ENCODE measurements at regions of chr9 and their contacts with region 1.

Region 1: GRCh38 chr9:21943464-21943863 is 50.7 kb downstream of the CDKN2A start:
- DNase-seq: no peak
- ATAC-seq: no peak
- H3K4me3 ChIP-seq: no peak overlapping the region
- H3K27ac ChIP-seq: no peak overlapping the region
- H3K4me1 ChIP-seq: no peaks in the 10 kb centered on the region
- H3K27me3 ChIP-seq: peaks cover 3% of the 10 kb centered on the region
- CTCF ChIP-seq: no peak
- POLR2A ChIP-seq: no peak
- RAD21 ChIP-seq: no peak

Region 2: DNA sequence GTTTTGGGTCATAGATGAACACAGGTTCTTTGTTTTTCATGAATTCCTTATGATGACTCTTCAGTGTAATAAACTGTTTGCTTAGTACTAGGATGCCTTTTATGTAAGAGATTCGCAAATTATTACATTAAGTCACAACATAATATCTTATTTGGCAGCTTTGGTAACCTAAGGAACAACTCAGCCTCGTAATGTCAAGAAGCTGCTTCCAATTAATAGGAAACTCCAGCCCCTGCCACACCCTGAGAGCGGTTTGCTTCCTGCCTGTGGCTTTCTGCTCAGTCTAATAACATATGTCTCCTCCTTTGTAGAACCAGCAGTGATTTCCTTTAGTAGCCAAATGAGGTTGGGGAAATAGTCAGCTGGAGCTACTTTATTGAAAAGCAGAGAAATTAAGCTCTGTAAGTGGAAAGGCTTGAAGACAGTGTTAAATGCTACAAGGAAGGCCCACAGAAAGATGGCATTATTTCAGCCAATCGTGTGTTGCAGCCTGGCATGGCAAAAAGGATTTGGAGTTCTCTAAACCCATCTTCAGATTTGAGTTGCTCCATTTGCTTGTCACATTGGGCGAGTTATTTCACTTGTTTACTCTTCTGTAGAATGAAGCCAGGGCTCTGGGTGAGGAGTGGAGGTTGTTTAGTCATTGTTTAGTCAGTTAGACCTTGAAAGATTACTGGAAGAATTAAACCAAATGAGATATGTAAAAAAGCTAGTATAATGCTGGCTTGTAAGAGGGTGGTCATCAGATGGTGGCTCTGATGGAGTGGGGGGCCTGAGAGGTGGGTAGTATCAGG is 87.0 kb before region 1 on chr9:
- CTCF ChIA-PET with region 1: no interaction called
- POLR2A ChIA-PET with region 1: no interaction called
- dilution Hi-C with region 1: no loop called
- in situ Hi-C with region 1: no loop called
- intact Hi-C with region 1: loop called (anchors 5 kb)
- DNase-seq: peak; percentile 51
- ATAC-seq: peak; percentile 75
- H3K4me3 ChIP-seq: no peak overlapping the region
- H3K27ac ChIP-seq: peak overlapping the region; percentile 33; the same call in 1 of the 2 replicates
- H3K4me1 ChIP-seq: peaks cover 9% of the 10 kb centered on the region
- H3K27me3 ChIP-seq: no peaks in the 10 kb centered on the region
- CTCF ChIP-seq: no peak
- POLR2A ChIP-seq: no peak
- RAD21 ChIP-seq: no peak

Region 3: DNA sequence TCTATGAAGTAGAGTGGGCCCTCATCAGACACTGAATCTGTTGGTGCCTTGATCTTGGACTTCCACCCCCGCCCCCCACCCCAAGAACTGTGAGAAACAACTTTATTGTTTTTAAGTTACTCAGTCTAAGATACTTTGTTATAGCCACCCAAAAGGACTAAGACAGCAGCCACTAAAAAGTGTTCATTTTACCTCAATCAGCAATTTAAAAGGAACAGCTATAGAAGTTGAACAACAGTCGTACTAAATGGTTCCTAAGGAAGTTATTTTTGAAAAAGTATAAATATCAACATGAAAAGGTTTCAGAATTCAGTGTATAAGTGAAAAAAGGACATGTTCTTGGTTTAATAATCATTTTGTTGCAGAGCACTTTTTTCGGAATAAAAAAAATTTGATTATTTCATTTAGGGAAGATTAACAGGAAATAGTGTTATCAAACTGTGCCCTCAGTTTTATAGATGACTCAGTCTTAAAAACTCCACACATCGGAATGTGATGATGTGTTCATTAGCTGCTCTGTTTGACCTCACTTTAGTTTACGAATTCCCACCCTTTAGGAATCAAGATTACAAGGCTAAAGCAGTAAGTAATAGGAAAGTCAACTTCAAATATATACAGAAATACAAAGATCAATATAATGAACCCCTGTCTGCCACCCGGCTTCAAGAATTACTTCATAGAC is 69.8 kb before region 1 on chr9:
- CTCF ChIA-PET with region 1: no interaction called
- POLR2A ChIA-PET with region 1: no interaction called
- dilution Hi-C with region 1: no loop called
- in situ Hi-C with region 1: no loop called
- intact Hi-C with region 1: loop called (anchors 5 kb)
- DNase-seq: peak; percentile 49
- ATAC-seq: no peak
- H3K4me3 ChIP-seq: no peak overlapping the region
- H3K27ac ChIP-seq: no peak overlapping the region
- H3K4me1 ChIP-seq: no peaks in the 10 kb centered on the region
- H3K27me3 ChIP-seq: no peaks in the 10 kb centered on the region
- CTCF ChIP-seq: no peak
- POLR2A ChIP-seq: no peak
- RAD21 ChIP-seq: no peak

Region 4: GRCh38 chr9:22088718-22089064 is 145.2 kb after region 1 on chr9:
- CTCF ChIA-PET with region 1: no interaction called
- POLR2A ChIA-PET with region 1: no interaction called
- dilution Hi-C with region 1: no loop called
- in situ Hi-C with region 1: no loop called
- intact Hi-C with region 1: no loop called
- DNase-seq: no peak
- ATAC-seq: no peak
- H3K4me3 ChIP-seq: no peak overlapping the region
- H3K27ac ChIP-seq: no peak overlapping the region
- H3K4me1 ChIP-seq: peaks cover 4% of the 10 kb centered on the region
- H3K27me3 ChIP-seq: no peaks in the 10 kb centered on the region
- CTCF ChIP-seq: no peak
- POLR2A ChIP-seq: no peak
- RAD21 ChIP-seq: no peak